Brain microvascular endothelial cell (primary cell): ENCODE measurements at regions of chr12 and their contacts with region 1.

Region 1: DNA sequence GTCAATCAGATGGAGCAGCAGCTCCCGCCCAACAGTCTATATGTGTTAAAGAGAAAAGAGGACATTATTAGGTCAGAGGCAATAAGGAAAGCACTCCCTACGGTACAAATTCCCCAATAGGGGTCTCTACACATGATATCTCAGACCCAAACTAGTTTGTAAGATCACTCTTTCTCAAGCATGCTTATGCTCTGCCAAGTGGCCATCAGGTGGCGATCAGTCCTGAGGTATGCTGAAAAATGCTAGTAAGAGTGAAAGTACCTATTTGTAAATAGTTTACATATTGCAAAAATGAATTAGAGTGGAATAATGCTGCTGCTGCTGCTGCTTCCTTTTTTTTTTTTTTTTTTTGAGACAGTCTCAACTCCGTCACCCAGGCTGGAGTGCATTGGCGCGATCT is 61.0 kb downstream of the CPM start:
- DNase-seq: peak; percentile 16
- H3K4me3 ChIP-seq: no peak overlapping the region
- H3K27ac ChIP-seq: no peak overlapping the region
- H3K27me3 ChIP-seq: no peaks in the 10 kb centered on the region
- CTCF ChIP-seq: peak; percentile 72

Region 2: DNA sequence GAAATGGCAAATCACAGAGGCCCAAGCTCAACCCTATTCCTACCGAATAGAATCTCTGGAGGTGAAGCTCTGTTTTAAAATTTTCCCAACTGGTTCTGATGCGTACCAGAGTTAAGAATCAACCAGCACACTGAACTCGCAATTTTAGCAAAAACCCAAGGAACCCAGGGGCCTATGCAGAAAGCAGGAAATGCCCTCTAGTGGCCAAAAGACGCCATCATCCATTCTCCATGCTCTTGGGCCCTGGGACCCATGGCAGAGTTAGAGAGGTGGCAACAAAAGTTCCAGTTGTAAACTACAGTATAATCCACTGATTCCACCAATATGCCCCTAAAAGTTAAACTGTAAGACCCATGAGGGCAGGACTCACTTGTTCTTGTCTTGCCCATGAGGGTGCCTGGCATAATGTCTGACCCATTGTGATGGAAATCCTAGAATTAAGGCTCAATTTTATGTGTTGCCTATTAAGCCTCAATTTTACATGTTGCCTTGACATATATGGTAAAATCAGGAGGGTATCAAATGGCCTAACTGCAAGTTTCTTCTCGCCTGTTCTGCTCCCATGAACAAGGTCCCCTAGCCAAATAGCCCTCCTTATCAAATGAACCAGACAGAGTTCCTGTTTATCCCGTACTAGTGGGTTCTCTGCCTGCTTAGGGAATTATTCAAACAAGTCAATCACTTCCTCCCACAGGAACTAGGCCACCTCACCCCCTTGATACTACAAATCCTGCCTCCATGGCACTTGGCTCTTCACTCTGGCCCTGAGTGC is 198.6 kb after region 1 on chr12:
- in situ Hi-C with region 1: loop called (anchors 25 kb)
- DNase-seq: peak; percentile 76
- H3K4me3 ChIP-seq: no peak overlapping the region
- H3K27ac ChIP-seq: no peak overlapping the region
- H3K27me3 ChIP-seq: no peaks in the 10 kb centered on the region
- CTCF ChIP-seq: peak; percentile 97

Region 3: GRCh38 chr12:69254046-69254445 is 382.1 kb after region 1 on chr12:
- in situ Hi-C with region 1: loop called (anchors 25 kb)
- DNase-seq: no peak
- H3K4me3 ChIP-seq: no peak overlapping the region
- H3K27ac ChIP-seq: no peak overlapping the region
- H3K27me3 ChIP-seq: no peaks in the 10 kb centered on the region
- CTCF ChIP-seq: peak; percentile 50